ENCODE measurements at regions of chr3 and their contacts with region 1.

Region 1: GRCh38 chr3:94285870-94286269 is 223.0 kb downstream of the NSUN3 start:
- DNase-seq: peak; percentile 65
- ATAC-seq: peak; percentile 76
- H3K4me3 ChIP-seq: no peak overlapping the region
- H3K27ac ChIP-seq: no peak overlapping the region
- H3K4me1 ChIP-seq: no peaks in the 10 kb centered on the region
- H3K27me3 ChIP-seq: no peaks in the 10 kb centered on the region
- CTCF ChIP-seq: peak; percentile 67

Region 2: DNA sequence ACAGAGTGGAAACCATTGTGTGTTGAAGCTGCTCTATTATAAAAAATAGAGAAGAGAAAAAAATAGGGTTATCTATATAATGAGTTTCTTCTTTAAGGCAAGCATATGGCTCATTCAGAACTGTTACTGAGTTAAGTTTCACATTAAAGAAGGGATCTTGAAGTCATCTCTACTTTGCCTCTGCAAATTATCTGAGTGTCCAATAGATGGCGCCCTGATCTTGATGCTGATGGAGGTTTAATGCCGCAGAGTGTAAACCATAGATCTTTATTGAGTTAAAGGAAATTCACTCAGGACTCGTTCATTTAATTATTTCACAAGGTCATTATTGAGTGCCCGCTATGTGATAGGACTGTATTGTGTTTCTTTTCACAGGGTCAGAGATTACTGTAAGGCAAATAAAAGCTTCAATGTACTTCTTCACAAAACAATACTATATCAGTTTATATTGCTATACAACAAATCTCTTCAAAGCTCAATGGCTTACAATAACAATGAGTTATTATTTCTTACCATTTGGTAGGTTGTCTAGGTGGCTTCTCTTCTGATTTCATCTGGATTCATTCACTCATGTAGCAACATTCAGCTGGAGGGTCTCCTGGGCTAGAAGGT is 51.6 kb before region 1 on chr3:
- CTCF ChIA-PET with region 1: no interaction called
- POLR2A ChIA-PET with region 1: no interaction called
- intact Hi-C with region 1: loop called (anchors 1 kb)
- DNase-seq: peak; percentile 70
- ATAC-seq: peak; percentile 86
- H3K4me3 ChIP-seq: no peak overlapping the region
- H3K27ac ChIP-seq: no peak overlapping the region
- H3K4me1 ChIP-seq: no peaks in the 10 kb centered on the region
- H3K27me3 ChIP-seq: no peaks in the 10 kb centered on the region
- CTCF ChIP-seq: peak; percentile 91

Region 3: DNA sequence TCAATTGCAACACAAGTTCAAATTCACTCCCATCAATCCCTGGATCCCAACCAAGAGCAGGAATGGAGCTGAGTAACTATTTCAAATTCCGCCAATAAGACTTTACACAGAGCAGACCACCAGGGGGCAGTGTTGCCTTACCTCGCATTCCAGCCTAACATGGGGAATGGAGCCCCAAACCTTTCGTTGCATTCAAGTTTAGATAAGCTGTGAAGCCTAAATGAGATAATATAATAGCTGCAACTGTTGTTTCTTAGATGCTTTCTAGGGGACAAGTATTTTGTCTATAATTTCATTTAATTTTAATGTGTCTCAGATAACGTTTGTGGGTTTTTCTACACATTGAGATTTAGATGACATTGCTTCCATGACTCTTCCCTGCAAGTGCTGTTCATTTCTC is 36.3 kb before region 1 on chr3:
- CTCF ChIA-PET with region 1: interaction called, 4 read pairs
- POLR2A ChIA-PET with region 1: no interaction called
- intact Hi-C with region 1: loop called (anchors 1 kb)
- DNase-seq: peak; percentile 81
- ATAC-seq: peak; percentile 74
- H3K4me3 ChIP-seq: no peak overlapping the region
- H3K27ac ChIP-seq: no peak overlapping the region
- H3K4me1 ChIP-seq: no peaks in the 10 kb centered on the region
- H3K27me3 ChIP-seq: peaks cover 37% of the 10 kb centered on the region
- CTCF ChIP-seq: peak; percentile 95

Measured in PC-3 (cell line).